ENCODE measurements at regions of chr2 and their contacts with region 1.

Region 1: DNA sequence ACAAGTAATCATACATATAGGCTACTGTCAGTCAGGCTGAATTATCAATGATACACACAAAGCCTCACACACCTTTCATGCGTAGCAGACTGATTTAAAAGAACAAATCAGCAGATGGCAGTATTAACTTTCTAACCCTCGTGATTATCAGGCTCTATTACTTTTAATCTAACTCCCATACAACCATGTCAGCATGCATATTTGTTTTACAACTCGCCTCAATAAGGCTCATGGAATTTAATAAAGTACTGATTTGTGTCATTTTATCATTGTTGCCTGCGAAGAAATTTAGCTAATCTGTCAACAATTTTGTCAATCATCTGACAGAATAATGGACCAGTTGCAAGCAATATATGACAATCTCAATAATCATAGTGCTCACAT is 82.8 kb downstream of the SLC25A12 start:
- DNase-seq: peak in 1 of 2 experiments; percentile 26
- H3K4me3 ChIP-seq: no peak overlapping the region
- H3K4me3 Mint-ChIP-seq: no peak overlapping the region
- H3K27ac Mint-ChIP-seq: no peak overlapping the region
- H3K4me1 ChIP-seq: peaks cover 4% of the 10 kb centered on the region
- H3K4me1 Mint-ChIP-seq: no peaks in the 10 kb centered on the region
- H3K27me3 ChIP-seq: no peaks in the 10 kb centered on the region
- H3K27me3 Mint-ChIP-seq: no peaks in the 10 kb centered on the region
- CTCF ChIP-seq: peak; percentile 34 to 41

Region 2: GRCh38 chr2:171574149-171574795 is 237.0 kb before region 1 on chr2:
- CTCF ChIA-PET with region 1: no interaction called
- POLR2A ChIA-PET with region 1: no interaction called
- intact Hi-C with region 1: loop called (anchors 10 kb)
- DNase-seq: peak; percentile 71 to 87
- H3K4me3 ChIP-seq: no peak overlapping the region
- H3K4me3 Mint-ChIP-seq: no peak overlapping the region
- H3K27ac Mint-ChIP-seq: no peak overlapping the region
- H3K4me1 ChIP-seq: no peaks in the 10 kb centered on the region
- H3K4me1 Mint-ChIP-seq: no peaks in the 10 kb centered on the region
- H3K27me3 ChIP-seq: no peaks in the 10 kb centered on the region; the same call in 1 of the 2 replicates
- H3K27me3 Mint-ChIP-seq: no peaks in the 10 kb centered on the region
- CTCF ChIP-seq: peak; percentile 90 to 96

Region 3: DNA sequence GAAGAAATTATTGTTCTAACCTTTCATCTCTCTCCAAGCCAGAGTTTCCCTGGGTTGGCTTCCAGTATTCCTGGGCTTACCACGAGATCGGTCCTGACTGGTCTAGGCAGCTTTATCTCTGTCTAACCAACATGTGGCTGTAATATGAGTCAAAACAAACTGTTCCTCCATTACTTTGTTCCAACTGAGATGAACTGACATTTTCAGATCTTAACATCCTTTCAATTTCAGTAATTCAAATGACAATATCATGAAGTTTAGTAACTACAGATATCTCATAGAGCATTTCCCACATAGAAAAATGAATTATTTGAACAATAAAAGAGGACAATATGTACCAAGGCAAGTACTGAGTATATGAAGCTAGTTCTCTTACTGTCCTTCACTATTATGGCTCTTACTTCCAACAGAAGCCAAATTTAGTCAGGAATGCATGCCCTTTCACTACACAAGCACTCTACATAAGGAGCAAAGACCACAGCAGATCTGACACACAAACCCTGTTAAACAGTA is 67.3 kb after region 1 on chr2:
- CTCF ChIA-PET with region 1: no interaction called
- POLR2A ChIA-PET with region 1: no interaction called
- intact Hi-C with region 1: no loop called
- DNase-seq: no peak
- H3K4me3 ChIP-seq: no peak overlapping the region
- H3K4me3 Mint-ChIP-seq: no peak overlapping the region
- H3K27ac Mint-ChIP-seq: no peak overlapping the region
- H3K4me1 ChIP-seq: no peaks in the 10 kb centered on the region
- H3K4me1 Mint-ChIP-seq: no peaks in the 10 kb centered on the region
- H3K27me3 ChIP-seq: no peaks in the 10 kb centered on the region
- H3K27me3 Mint-ChIP-seq: no peaks in the 10 kb centered on the region
- CTCF ChIP-seq: no peak

Region 4: GRCh38 chr2:172113617-172114016 is 302.4 kb after region 1 on chr2:
- CTCF ChIA-PET with region 1: no interaction called
- POLR2A ChIA-PET with region 1: no interaction called
- intact Hi-C with region 1: no loop called
- DNase-seq: no peak
- H3K4me3 ChIP-seq: no peak overlapping the region
- H3K4me3 Mint-ChIP-seq: no peak overlapping the region
- H3K27ac Mint-ChIP-seq: no peak overlapping the region
- H3K4me1 ChIP-seq: peaks cover 10% of the 10 kb centered on the region
- H3K4me1 Mint-ChIP-seq: peaks cover 9% of the 10 kb centered on the region
- H3K27me3 ChIP-seq: no peaks in the 10 kb centered on the region
- H3K27me3 Mint-ChIP-seq: no peaks in the 10 kb centered on the region
- CTCF ChIP-seq: peak; percentile 20 to 30